Heart left ventricle (tissue), 16 donors: ENCODE measurements at regions of chr7 and their contacts with region 1.

Region 1: GRCh38 chr7:94368371-94368791 is 26.3 kb upstream of the COL1A2 start:
- DNase-seq: no peak
- ATAC-seq: peak in 2 of 4 donors; percentile 52 to 62
- H3K4me3 ChIP-seq: peak overlapping the region in 3 of 12 donors; percentile 14 to 28 (median 17)
- H3K27ac ChIP-seq: peak overlapping the region; percentile 32 to 75 (median 58)
- H3K4me1 ChIP-seq: peaks cover 0 to 21% (median 11%) of the 10 kb centered on the region in 12 donors
- H3K27me3 ChIP-seq: no peaks in the 10 kb centered on the region
- CTCF ChIP-seq: no peak
- POLR2A ChIP-seq: no peak

Region 2: DNA sequence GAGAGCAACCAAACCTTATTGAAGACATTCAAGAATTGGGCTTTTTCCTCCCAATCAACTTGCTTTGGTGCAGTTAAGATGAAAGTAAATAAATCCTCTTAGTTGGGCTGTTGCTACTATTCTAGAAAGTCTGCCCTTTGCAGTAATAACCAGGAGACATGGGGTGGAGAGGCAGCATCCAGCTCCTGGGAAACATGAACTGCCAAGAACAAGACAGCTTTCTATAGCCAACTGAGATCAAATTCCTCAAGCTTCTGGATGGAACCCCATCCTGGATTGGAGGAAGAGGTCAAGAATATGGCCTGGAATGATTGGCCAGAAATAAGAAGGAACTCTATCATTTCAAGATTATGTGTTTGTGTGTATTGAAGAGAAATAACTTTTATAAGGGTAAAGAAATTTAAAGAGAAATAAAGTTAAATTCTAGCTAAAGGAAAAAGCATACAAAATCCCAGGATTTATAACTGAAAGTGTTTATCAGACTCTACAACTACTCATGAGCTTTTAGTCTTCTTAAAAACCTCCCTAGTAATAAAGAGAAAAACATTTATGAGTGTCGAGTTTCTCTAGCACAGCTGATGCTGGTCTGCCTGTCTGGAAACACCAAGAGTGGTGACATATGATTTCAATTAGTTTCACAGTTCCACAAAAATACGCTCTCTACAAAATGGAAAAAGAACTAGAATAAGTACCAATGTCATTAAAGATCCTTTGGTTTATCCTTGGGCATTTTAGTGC is 43.8 kb before region 1 on chr7:
- intact Hi-C with region 1: loop called in 1 of 10 experiments (anchors 5 kb)
- DNase-seq: no peak
- ATAC-seq: peak in 2 of 4 donors; percentile 37 to 44
- H3K4me3 ChIP-seq: no peak overlapping the region
- H3K27ac ChIP-seq: peak overlapping the region in 8 of 12 donors; percentile 17 to 66 (median 50)
- H3K4me1 ChIP-seq: no peaks in the 10 kb centered on the region
- H3K27me3 ChIP-seq: no peaks in the 10 kb centered on the region
- CTCF ChIP-seq: no peak
- POLR2A ChIP-seq: no peak